H1 (cell line): ENCODE measurements at regions of chr2 and their contacts with region 1.

Region 1: GRCh38 chr2:101831351-101831865 is 133.9 kb downstream of the MAP4K4 start:
- DNase-seq: peak in 1 of 2 experiments; percentile 70
- H3K4me3 ChIP-seq: no peak overlapping the region
- H3K27ac ChIP-seq: no peak overlapping the region
- H3K4me1 ChIP-seq: peaks cover 0 to 3% (median 1%) of the 10 kb centered on the region in 4 experiments; a peak in 2 of 7 replicates
- H3K27me3 ChIP-seq: no peaks in the 10 kb centered on the region
- CTCF ChIP-seq: peak; percentile 44 to 80 (median 77)
- EP300 ChIP-seq: no peak
- POLR2A ChIP-seq: no peak
- RAD21 ChIP-seq: peak; percentile 62 to 72

Region 2: DNA sequence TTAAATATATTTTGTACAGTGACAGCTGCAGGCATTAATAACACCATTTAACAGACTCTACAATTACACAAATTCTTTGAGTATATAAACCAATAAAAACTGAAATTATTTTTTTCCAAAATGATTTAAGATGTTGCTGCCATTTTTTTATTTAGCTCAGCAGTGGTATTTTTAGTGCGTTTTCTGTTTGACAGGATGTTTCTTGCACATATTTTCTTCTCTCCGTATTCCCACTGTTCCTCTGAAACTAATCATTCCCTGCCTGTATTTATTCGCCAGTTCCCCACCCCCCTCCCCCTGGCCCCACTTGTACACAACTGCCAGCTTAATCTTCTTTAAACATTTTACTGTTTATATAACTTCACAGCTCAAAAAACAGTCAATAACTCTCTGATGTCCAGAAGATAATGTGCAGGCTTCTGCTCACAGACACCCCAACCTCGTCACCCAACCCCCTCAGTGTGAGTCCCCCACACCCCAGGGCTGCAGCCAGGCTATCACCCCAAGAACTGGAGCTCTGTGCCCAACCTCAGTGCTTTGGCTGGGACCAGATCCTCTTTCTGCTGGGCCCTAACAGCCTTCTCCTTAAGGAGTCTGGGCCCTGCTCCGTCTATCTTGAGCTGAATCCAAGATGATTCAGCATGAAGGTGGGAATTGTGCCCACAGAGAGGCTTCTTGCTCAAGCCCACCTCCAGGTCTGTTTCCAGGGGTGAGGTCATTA is 175.5 kb before region 1 on chr2:
- CTCF ChIA-PET with region 1: no interaction called
- POLR2A ChIA-PET with region 1: no interaction called
- DNase-seq: no peak
- H3K4me3 ChIP-seq: no peak overlapping the region
- H3K27ac ChIP-seq: no peak overlapping the region
- H3K4me1 ChIP-seq: peaks cover 0 to 3% (median 1%) of the 10 kb centered on the region in 4 experiments; a peak in 3 of 7 replicates
- H3K27me3 ChIP-seq: no peaks in the 10 kb centered on the region
- CTCF ChIP-seq: no peak
- EP300 ChIP-seq: no peak
- POLR2A ChIP-seq: no peak
- RAD21 ChIP-seq: no peak

Region 3: GRCh38 chr2:101725515-101726192 is 105.8 kb before region 1 on chr2:
- CTCF ChIA-PET with region 1: interaction called, 12 read pairs
- POLR2A ChIA-PET with region 1: no interaction called
- DNase-seq: peak in 1 of 2 experiments; percentile 63
- H3K4me3 ChIP-seq: no peak overlapping the region
- H3K27ac ChIP-seq: no peak overlapping the region
- H3K4me1 ChIP-seq: peaks cover 0 to 8% (median 3%) of the 10 kb centered on the region in 4 experiments; a peak in 5 of 7 replicates
- H3K27me3 ChIP-seq: no peaks in the 10 kb centered on the region
- CTCF ChIP-seq: peak in 2 of 3 experiments; percentile 45 to 50; a peak in 3 of 4 replicates
- EP300 ChIP-seq: no peak
- POLR2A ChIP-seq: no peak
- RAD21 ChIP-seq: peak; percentile 60 to 62

Region 4: DNA sequence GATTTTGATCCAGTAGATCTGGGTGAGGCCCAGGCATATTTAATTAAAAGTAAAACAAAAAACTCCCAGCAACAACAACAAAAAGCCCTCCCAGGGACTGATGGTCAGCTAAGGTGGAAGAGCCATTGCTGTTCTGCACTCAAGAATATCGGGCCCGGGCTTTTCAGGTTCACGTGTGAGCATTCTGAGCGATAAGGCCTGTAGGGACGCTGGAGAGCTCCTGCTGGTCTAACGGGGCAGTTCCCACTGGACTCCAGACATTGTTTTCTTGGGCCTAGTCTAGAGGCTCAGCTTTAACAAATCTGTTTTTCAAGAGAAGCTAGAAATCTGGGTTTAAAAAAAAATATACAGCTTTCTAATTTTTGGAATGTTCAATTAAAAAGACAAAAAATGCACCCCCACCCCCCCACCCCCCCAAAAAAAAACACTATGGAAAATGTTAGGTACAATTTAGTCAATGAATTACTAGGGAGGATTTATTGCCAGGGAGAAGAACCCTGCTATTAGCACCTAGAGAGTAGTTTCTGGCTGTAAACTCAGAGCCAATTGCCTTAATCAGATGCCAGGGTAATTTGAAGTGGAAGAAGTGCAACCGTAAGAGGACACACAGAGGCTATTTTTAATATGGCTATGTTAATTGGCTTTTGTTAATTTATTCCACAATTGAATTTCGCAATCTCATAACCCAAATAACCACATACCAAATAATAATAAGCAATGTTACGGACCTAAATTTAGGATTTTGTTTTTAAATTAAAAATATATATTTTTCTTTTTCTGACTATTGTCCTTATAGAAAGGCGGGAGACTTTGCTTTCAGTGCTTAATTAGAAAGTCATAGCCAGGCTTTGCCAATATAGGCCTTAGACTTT is 55.0 kb before region 1 on chr2:
- CTCF ChIA-PET with region 1: interaction called, 14 read pairs
- POLR2A ChIA-PET with region 1: no interaction called
- DNase-seq: no peak
- H3K4me3 ChIP-seq: no peak overlapping the region
- H3K27ac ChIP-seq: no peak overlapping the region
- H3K4me1 ChIP-seq: peaks cover 13 to 38% (median 27%) of the 10 kb centered on the region in 4 experiments
- H3K27me3 ChIP-seq: no peaks in the 10 kb centered on the region
- CTCF ChIP-seq: peak; percentile 48 to 59 (median 48)
- EP300 ChIP-seq: no peak
- POLR2A ChIP-seq: no peak
- RAD21 ChIP-seq: no peak; a peak in 2 of 4 replicates

Region 5: DNA sequence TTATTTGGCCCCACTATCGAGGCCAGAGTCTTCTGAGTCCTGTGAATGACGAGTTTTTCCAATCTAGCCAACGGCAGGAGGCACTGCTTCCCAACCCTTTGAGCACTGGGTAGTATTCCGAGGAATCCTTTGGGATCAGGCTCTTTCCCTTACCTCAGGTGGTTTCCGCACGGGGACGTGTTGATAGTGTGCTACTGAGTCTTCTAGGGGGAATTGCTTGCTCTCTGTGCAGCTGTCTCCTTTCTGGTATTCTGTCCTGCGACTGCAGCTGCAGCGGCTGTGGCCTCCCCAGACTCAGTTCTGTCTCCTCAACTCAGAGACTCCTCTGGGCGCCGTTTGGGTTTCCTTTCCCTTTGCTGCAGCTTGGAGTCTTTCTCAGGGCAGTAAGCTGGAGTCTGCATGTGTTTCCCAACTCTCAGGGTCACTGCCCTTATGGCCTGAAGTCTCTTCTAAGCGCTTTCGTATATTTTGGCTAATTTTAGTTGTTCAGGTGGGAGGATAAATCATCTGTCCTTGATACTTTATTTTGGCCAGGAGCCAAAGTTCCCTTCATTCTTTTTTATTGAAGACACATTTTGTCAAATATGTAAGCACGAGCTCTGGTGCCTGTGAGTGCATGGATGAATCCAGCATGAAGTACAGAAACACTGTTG is 15.5 kb before region 1 on chr2:
- CTCF ChIA-PET with region 1: interaction called, 11 read pairs
- POLR2A ChIA-PET with region 1: no interaction called
- DNase-seq: no peak
- H3K4me3 ChIP-seq: no peak overlapping the region
- H3K27ac ChIP-seq: no peak overlapping the region
- H3K4me1 ChIP-seq: peaks cover 0 to 25% (median 7%) of the 10 kb centered on the region in 4 experiments; a peak in 3 of 7 replicates
- H3K27me3 ChIP-seq: no peaks in the 10 kb centered on the region
- CTCF ChIP-seq: peak in 1 of 3 experiments; percentile 18; a peak in 1 of 4 replicates
- EP300 ChIP-seq: no peak
- POLR2A ChIP-seq: no peak
- RAD21 ChIP-seq: 0 out of 4 replicates have a peak, but pooled peaks of 1 of the 2 experiments have one; percentile 7

Region 6: GRCh38 chr2:101846973-101847372 is 15.6 kb after region 1 on chr2:
- CTCF ChIA-PET with region 1: interaction called, 10 read pairs
- POLR2A ChIA-PET with region 1: no interaction called
- DNase-seq: no peak
- H3K4me3 ChIP-seq: no peak overlapping the region
- H3K27ac ChIP-seq: no peak overlapping the region
- H3K4me1 ChIP-seq: no peaks in the 10 kb centered on the region
- H3K27me3 ChIP-seq: no peaks in the 10 kb centered on the region
- CTCF ChIP-seq: no peak
- EP300 ChIP-seq: no peak
- POLR2A ChIP-seq: no peak
- RAD21 ChIP-seq: no peak